GM12878 (cell line): ENCODE measurements at regions of chr4 and their contacts with region 1.

Region 1: DNA sequence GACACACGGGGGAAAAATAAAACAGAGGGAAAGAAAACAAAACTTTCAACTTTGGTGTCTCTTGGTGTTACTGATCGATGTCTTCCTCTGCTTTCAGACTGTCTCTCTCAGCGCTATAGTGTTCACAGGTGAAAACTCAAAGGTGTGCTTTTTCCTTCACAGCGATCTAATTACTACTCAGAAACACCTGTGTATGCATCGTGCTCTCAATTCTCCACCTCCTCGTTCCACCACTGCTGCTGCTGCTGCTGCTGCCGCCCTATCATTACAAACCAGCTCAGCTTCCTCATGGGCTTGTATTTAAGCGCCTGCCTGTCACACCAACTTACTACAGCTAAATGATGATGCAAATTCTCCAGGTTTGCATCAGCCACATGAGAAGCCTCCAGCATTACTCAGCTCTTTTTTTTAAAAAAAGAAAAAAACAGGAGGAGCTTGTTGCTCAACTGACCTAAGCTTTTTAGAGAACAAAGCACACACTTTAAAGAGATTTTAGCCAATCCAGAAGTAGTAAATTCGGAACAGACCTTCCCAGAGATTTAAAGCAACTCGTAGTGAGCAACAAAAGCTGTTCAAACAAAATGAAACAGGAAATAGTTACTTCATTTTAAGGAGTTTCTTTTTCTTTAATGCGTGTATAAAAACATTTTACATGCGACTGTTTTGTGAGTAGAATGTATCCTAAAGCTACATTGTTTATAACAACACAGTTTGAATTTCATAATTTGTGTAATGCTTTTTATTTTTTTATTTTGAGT is at the start of gene SLC7A11:
- DNase-seq: peak; percentile 93
- ATAC-seq: peak; percentile 90
- H3K4me3 ChIP-seq: peak within 1 kb of the TSS; percentile 81
- H3K27ac ChIP-seq: peak within 1 kb of the TSS; percentile 83
- H3K4me1 ChIP-seq: no peaks in the 10 kb centered on the region
- H3K27me3 ChIP-seq: no peaks in the 10 kb centered on the region
- CTCF ChIP-seq: no peak
- EP300 ChIP-seq: peak; percentile 42 to 68; a peak in 2 of 4 replicates
- POLR2A ChIP-seq: peak; percentile 97
- RAD21 ChIP-seq: no peak
- polyA plus RNA-seq, gene SLC7A11: 1.6 to 2.2 TPM

Region 2: GRCh38 chr4:138114434-138114833 is 127.8 kb before region 1 on chr4:
- CTCF ChIA-PET with region 1: no interaction called
- POLR2A ChIA-PET with region 1: no interaction called
- RAD21 ChIA-PET with region 1: interaction called, 3 read pairs
- SMC1A ChIA-PET with region 1: no interaction called
- in situ Hi-C with region 1: no loop called
- intact Hi-C with region 1: loop called (anchors 5 kb)
- DNase-seq: peak; percentile 45
- ATAC-seq: peak; percentile 100
- H3K4me3 ChIP-seq: no peak overlapping the region
- H3K27ac ChIP-seq: no peak overlapping the region
- H3K4me1 ChIP-seq: peaks cover 11% of the 10 kb centered on the region
- H3K27me3 ChIP-seq: no peaks in the 10 kb centered on the region
- CTCF ChIP-seq: no peak
- EP300 ChIP-seq: 0 out of 4 replicates have a peak, but pooled peaks of 1 of the 2 experiments have one; percentile 46
- POLR2A ChIP-seq: no peak
- RAD21 ChIP-seq: no peak

Region 3: GRCh38 chr4:138190452-138190858 is 51.8 kb before region 1 on chr4:
- CTCF ChIA-PET with region 1: interaction called, 8 read pairs
- POLR2A ChIA-PET with region 1: interaction called, 20 read pairs
- RAD21 ChIA-PET with region 1: interaction called, 26 read pairs
- SMC1A ChIA-PET with region 1: interaction called, 68 read pairs
- in situ Hi-C with region 1: no loop called
- intact Hi-C with region 1: loop called (anchors 1 kb)
- DNase-seq: peak; percentile 66
- ATAC-seq: peak; percentile 89
- H3K4me3 ChIP-seq: no peak overlapping the region
- H3K27ac ChIP-seq: peak overlapping the region; percentile 93
- H3K4me1 ChIP-seq: peaks cover 22% of the 10 kb centered on the region
- H3K27me3 ChIP-seq: no peaks in the 10 kb centered on the region
- CTCF ChIP-seq: no peak
- EP300 ChIP-seq: peak; percentile 98
- POLR2A ChIP-seq: no peak
- RAD21 ChIP-seq: no peak

Region 4: DNA sequence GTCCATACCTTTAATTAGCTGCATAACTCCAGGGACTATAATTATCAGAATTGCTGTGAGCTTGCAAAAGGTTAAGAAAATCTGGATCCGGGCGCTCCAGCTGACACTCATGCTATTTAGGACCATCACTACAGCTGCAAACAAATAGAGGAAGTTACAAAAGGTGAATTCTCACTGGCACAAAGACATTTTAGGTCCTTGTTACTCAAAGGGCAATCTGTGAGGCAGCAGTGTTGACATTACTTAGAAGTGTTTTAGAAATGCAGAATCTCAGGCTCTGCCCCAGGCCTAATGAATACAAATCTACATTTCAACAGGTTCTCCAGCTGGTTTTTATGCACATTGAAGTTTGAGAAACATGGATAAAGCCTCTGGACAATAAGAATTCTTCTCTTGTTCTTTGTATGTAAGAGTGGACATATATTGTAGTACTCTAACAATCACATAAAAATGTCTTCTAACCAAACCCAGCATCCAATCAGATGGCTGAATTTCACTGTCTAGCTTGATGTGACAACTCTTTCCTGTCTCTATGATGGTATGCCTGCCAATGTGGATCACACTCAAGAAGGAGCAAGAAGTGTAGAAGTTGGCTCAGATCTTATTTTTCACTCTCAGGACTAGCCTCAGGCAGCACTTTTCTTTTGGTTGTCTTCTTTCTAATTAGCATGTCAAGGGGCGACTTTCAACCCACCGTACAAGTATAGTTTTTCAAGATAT is 18.9 kb before region 1 on chr4:
- CTCF ChIA-PET with region 1: interaction called, 3 read pairs
- POLR2A ChIA-PET with region 1: interaction called, 9 read pairs
- RAD21 ChIA-PET with region 1: interaction called, 47 read pairs
- SMC1A ChIA-PET with region 1: interaction called, 25 read pairs
- in situ Hi-C with region 1: no loop called
- intact Hi-C with region 1: no loop called
- DNase-seq: no peak
- ATAC-seq: peak; percentile 76
- H3K4me3 ChIP-seq: no peak overlapping the region
- H3K27ac ChIP-seq: no peak overlapping the region
- H3K4me1 ChIP-seq: no peaks in the 10 kb centered on the region
- H3K27me3 ChIP-seq: no peaks in the 10 kb centered on the region
- CTCF ChIP-seq: no peak
- EP300 ChIP-seq: no peak
- POLR2A ChIP-seq: no peak
- RAD21 ChIP-seq: no peak

Region 5: GRCh38 chr4:138341739-138342415 is 99.6 kb after region 1 on chr4:
- CTCF ChIA-PET with region 1: no interaction called
- POLR2A ChIA-PET with region 1: interaction called, 5 read pairs
- RAD21 ChIA-PET with region 1: interaction called, 6 read pairs
- SMC1A ChIA-PET with region 1: interaction called, 13 read pairs
- in situ Hi-C with region 1: no loop called
- intact Hi-C with region 1: loop called (anchors 5 kb)
- DNase-seq: peak; percentile 72
- ATAC-seq: peak; percentile 91
- H3K4me3 ChIP-seq: no peak overlapping the region
- H3K27ac ChIP-seq: peak overlapping the region; percentile 46; the same call in 1 of the 2 replicates
- H3K4me1 ChIP-seq: peaks cover 7% of the 10 kb centered on the region
- H3K27me3 ChIP-seq: no peaks in the 10 kb centered on the region
- CTCF ChIP-seq: no peak
- EP300 ChIP-seq: no peak
- POLR2A ChIP-seq: no peak
- RAD21 ChIP-seq: no peak

Region 6: DNA sequence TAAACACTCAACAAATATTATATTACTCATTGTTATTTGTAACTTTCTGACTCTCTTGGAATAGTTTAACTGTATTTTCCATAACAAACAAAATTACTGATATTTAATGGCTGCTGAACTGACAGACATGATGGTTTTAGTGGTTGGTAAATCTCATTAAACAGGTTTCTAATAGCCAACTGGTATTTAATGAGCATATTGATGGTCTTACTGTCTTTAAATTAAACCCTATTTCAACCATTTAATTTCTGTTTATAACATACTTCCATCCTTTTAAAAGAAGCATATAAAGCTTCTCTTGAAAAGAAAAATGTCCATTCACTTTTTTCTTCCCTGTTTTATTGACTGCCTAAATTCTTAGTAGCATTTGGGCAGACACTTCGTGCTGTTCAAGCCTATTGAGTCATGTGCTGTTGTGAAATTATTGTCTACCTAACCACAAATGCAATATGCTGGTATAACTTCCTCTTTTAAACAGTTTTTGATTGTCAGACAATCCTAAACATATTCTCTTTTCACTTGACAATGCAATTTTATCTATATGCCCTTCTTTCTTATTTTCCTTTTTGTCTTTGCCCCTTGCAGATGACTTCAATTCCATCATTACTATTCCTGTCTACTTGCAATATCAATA is 163.8 kb after region 1 on chr4:
- CTCF ChIA-PET with region 1: interaction called, 5 read pairs
- POLR2A ChIA-PET with region 1: interaction called, 3 read pairs
- RAD21 ChIA-PET with region 1: interaction called, 16 read pairs
- SMC1A ChIA-PET with region 1: interaction called, 36 read pairs
- in situ Hi-C with region 1: no loop called
- intact Hi-C with region 1: loop called (anchors 2 kb)
- DNase-seq: peak; percentile 42
- ATAC-seq: peak; percentile 86
- H3K4me3 ChIP-seq: no peak overlapping the region
- H3K27ac ChIP-seq: peak overlapping the region; percentile 38; the same call in 1 of the 2 replicates
- H3K4me1 ChIP-seq: peaks cover 28% of the 10 kb centered on the region
- H3K27me3 ChIP-seq: no peaks in the 10 kb centered on the region
- CTCF ChIP-seq: no peak
- EP300 ChIP-seq: peak; percentile 68 to 83
- POLR2A ChIP-seq: no peak
- RAD21 ChIP-seq: no peak